Activated CD4-positive, alpha-beta memory T cell treated with anti-CD3 and anti-CD28 coated beads for 36 hours (primary cell): ENCODE measurements at regions of chr7 and their contacts with region 1.

Region 1: GRCh38 chr7:138746073-138746472 is 44.9 kb upstream of the SVOPL start:
- DNase-seq: peak; percentile 58
- H3K4me3 Mint-ChIP-seq: no peak overlapping the region
- H3K27ac Mint-ChIP-seq: peak overlapping the region; percentile 51
- H3K4me1 Mint-ChIP-seq: peaks cover 39% of the 10 kb centered on the region
- H3K27me3 Mint-ChIP-seq: no peaks in the 10 kb centered on the region

Region 2: GRCh38 chr7:138865843-138866242 is 119.8 kb after region 1 on chr7:
- CTCF ChIA-PET with region 1: interaction called, 6 read pairs
- POLR2A ChIA-PET with region 1: interaction called, 3 read pairs
- intact Hi-C with region 1: loop called (anchors 1 kb)
- DNase-seq: peak; percentile 73
- H3K4me3 Mint-ChIP-seq: no peak overlapping the region
- H3K27ac Mint-ChIP-seq: no peak overlapping the region
- H3K4me1 Mint-ChIP-seq: peaks cover 21% of the 10 kb centered on the region
- H3K27me3 Mint-ChIP-seq: peaks cover 3% of the 10 kb centered on the region

Region 3: DNA sequence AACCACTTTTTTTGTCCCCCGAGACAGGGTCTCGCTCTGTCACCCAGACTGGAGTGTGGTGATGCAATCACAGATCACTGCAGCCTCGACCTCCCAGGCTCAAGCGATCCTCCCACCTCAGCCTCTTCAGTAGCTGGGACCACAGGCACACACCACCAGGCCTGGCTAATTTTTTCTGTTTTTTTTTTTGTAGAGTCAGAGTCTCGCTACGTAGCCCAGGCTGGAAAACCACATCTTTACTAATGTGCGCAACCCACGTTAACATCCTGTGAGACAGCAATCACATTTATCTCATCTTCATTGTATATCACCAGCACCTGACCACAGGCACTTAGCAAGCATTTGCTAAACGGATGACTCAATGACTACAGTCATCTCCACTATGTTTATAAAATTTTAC is 129.7 kb after region 1 on chr7:
- CTCF ChIA-PET with region 1: no interaction called
- POLR2A ChIA-PET with region 1: interaction called, 3 read pairs
- intact Hi-C with region 1: loop called (anchors 1 kb)
- DNase-seq: peak; percentile 80
- H3K4me3 Mint-ChIP-seq: peak overlapping the region; percentile 29
- H3K27ac Mint-ChIP-seq: peak overlapping the region; percentile 85
- H3K4me1 Mint-ChIP-seq: peaks cover 25% of the 10 kb centered on the region
- H3K27me3 Mint-ChIP-seq: no peaks in the 10 kb centered on the region

Region 4: DNA sequence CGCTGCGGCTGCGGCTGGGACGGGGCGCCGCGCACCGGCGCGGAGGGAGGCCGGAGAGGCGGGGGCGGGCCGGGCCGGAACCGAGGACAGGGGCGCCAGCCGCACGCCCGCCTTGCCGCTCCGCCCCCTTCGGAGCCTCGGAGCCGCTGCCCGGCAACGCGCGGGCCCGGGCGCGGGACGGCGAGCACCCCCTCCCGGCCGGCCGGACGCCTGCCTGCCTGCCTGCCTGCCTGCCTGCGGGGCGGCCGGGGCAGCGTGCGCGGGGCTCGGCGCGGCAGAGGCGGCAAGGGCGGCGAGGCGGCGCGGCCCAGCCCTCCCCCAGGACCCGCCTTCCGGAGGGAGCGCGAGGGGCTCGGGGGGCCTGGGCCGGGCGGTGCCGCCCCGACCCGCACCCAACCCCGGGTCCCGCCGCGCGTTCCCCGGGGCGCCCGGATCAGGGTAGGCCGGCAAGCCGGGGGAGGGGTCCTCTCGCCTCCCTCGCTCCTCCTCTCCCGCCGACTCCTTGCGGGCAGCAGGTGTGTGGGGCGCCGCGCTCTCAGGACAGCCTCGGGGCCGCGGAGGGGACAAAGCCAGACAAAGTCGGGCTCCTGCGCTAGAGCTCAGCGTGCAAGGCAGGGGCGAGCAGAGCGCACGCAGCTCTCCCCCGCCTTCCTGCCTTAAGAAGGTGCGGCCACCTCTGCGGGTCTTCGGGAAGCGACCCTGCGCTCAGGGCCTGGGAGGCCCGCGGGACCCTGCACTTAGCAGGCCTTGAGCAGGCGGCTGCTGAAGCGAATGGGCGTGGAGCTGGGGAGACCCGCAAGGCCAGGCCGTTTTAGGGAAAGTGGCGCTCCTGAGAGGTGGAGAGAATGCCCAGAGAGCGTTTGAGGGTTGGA is 235.5 kb after region 1 on chr7 and contains the start of gene KIAA1549:
- CTCF ChIA-PET with region 1: no interaction called
- POLR2A ChIA-PET with region 1: no interaction called
- intact Hi-C with region 1: loop called (anchors 10 kb)
- DNase-seq: peak; percentile 70
- H3K4me3 Mint-ChIP-seq: peak within 1 kb of the TSS; percentile 79
- H3K27ac Mint-ChIP-seq: no peak within 1 kb of the TSS
- H3K4me1 Mint-ChIP-seq: peaks cover 10% of the 10 kb centered on the region
- H3K27me3 Mint-ChIP-seq: peaks cover 35% of the 10 kb centered on the region
- total RNA-seq, gene KIAA1549: 0.85 to 0.95 TPM